Testis (tissue), 5 donors: ENCODE measurements at regions of chr9 and their contacts with region 1.

Region 1: GRCh38 chr9:13427587-13427986 is 148.1 kb upstream of the MPDZ start:
- DNase-seq: no peak
- H3K4me3 ChIP-seq: no peak overlapping the region
- H3K27ac ChIP-seq: no peak overlapping the region
- H3K4me1 ChIP-seq: no peaks in the 10 kb centered on the region
- H3K27me3 ChIP-seq: no peaks in the 10 kb centered on the region
- CTCF ChIP-seq: peak; percentile 61 to 80 (median 72)
- POLR2A ChIP-seq: no peak

Region 2: DNA sequence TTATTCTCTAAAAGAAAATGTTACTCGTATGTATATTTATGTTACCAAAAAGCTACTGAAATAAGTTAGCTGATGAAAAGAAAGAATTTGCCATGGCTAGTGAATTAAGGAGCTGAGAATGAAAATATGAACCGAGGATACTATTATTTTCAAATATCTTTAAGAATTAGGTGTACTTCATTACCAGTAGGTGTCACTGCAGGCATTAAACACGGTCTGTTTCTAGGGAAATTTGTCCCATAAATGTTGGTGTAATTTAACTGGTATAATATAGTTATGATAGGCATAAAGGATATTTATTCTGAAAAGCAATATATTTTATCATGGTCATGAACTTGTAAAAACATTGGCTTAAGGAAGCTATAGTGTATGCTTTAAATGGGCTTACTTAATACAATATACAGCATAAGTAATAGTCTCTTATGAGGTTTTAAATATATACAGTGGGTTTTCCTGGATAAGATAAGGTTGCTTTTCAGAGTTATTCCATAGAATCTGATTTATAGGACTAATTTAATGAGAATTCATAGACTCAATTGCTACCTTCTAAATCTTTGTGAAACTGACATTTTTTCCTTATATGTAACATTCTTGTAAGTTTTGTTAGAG is 75.7 kb before region 1 on chr9:
- intact Hi-C with region 1: loop called (anchors 10 kb)
- DNase-seq: no peak
- H3K4me3 ChIP-seq: no peak overlapping the region
- H3K27ac ChIP-seq: no peak overlapping the region
- H3K4me1 ChIP-seq: no peaks in the 10 kb centered on the region
- H3K27me3 ChIP-seq: no peaks in the 10 kb centered on the region
- CTCF ChIP-seq: peak; percentile 19 to 58 (median 35)
- POLR2A ChIP-seq: no peak